GM18951 (cell line): ENCODE measurements at regions of chr3 and their contacts with region 1.

Region 1: DNA sequence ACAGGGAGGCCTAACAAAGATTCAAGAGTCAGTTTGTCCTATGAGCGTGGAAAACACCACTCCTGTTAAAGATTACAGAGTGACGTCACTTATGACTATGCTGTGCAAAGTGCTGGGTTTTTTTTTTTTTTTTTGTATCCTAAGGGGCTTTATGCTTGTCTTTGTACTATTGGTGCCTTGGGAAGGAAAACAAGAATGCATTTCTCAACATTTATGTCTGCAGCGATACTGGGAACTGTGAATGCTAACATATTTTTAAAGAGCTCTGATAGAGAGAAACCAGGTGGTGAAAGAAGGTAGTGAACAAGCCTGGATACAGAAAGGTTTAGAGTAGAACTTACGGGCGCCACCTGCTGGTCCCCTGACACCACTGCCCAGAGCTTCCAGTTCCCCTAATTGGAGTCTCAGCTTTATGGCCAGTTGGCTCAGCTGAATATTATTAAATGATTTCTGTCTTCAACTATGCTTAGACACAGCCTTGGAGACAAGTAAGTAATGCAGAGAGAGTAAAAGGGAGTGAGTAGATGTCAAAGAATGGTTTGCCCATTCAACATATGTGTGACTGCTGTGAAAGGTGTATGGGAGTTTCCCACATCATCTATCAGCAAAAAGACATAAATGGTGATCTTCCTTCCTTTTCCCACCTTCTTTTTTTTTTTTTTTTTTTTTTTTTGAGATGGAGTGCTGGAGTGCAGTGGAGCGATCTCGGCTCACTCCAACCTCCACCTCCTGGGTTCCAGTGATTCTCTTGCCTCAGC is 807.9 kb upstream of the CFAP20DC start:
- POLR2A ChIP-seq: no peak

Region 2: GRCh38 chr3:59212128-59212779 is 645.5 kb before region 1 on chr3:
- in situ Hi-C with region 1: loop called (anchors 25 kb)
- POLR2A ChIP-seq: no peak

Region 3: GRCh38 chr3:59313365-59313764 is 544.4 kb before region 1 on chr3:
- in situ Hi-C with region 1: loop called (anchors 25 kb)
- POLR2A ChIP-seq: no peak

Region 4: DNA sequence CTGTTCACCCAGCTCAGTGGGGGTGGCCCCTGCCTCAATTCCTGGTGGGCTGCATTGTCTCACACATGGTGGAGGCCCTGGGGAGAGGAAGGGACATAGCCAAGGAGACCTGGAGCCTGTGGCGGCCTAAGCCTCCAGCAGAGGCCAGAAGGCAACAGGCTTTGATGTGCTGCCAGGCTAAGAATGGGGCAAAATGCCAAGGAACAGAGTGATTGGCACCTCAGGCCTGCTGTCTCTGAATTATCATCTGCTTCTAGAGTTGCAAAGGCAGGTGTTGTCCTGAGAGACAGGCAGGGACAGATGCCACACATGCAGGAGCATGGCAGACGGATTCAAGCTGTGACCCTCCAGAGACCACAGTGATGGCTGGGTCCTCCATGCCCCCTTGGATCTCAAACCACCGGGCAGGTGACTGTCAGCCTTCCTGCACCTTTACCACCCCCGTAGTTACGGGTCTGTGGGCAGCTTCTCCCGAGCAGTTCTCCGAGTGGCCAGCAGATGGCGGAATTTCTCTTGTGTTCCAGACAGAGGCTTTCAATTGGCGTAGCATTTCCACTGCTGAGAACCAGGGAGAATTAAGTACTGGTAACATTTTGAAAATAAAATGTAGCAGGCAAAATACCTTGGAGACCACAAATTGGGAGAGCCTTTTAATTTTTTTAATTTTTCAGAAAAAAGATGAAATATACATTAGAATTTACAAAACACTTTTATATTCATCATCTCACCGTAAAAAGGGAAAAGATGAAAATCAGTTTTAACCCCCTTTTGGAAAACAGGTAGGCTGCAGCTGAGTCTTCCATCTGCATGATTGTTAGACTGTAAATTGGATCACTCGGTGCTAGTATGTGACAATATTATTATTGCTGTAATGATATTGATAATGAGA is 282.4 kb before region 1 on chr3:
- in situ Hi-C with region 1: loop called (anchors 25 kb)
- POLR2A ChIP-seq: no peak